ENCODE measurements at regions of chr11 and their contacts with region 1.

Region 1: GRCh38 chr11:134275534-134276395 is at the start of gene GLB1L3:
- DNase-seq: peak; percentile 89
- ATAC-seq: peak; percentile 80
- H3K4me3 Mint-ChIP-seq: peak within 1 kb of the TSS; percentile 96
- H3K27ac Mint-ChIP-seq: peak within 1 kb of the TSS; percentile 96
- H3K4me1 Mint-ChIP-seq: peaks cover 40% of the 10 kb centered on the region
- H3K27me3 Mint-ChIP-seq: peaks cover 3% of the 10 kb centered on the region
- total RNA-seq, gene GLB1L3: 11.7 to 12.2 TPM

Region 2: GRCh38 chr11:133947321-133947756 is 328.4 kb before region 1 on chr11:
- CTCF ChIA-PET with region 1: interaction called, 3 read pairs
- POLR2A ChIA-PET with region 1: interaction called, 7 read pairs
- intact Hi-C with region 1: loop called in 1 of 2 experiments (anchors 5 kb)
- DNase-seq: peak; percentile 87
- ATAC-seq: peak; percentile 27
- H3K4me3 Mint-ChIP-seq: peak overlapping the region; percentile 65
- H3K27ac Mint-ChIP-seq: peak overlapping the region; percentile 85
- H3K4me1 Mint-ChIP-seq: peaks cover 75% of the 10 kb centered on the region
- H3K27me3 Mint-ChIP-seq: no peaks in the 10 kb centered on the region

Region 3: GRCh38 chr11:134253188-134253993 is 22.4 kb before region 1 on chr11 and contains the starts of genes ACAD8 and THYN1:
- CTCF ChIA-PET with region 1: interaction called, 33 read pairs
- POLR2A ChIA-PET with region 1: interaction called, 7 read pairs
- intact Hi-C with region 1: loop called (anchors 1 kb)
- DNase-seq: peak; percentile 98
- ATAC-seq: peak; percentile 99
- H3K4me3 Mint-ChIP-seq: peak within 1 kb of the TSS; percentile 90
- H3K27ac Mint-ChIP-seq: peak within 1 kb of the TSS; percentile 80
- H3K4me1 Mint-ChIP-seq: peaks cover 36% of the 10 kb centered on the region
- H3K27me3 Mint-ChIP-seq: no peaks in the 10 kb centered on the region
- total RNA-seq, gene ACAD8: 12.4 to 16.6 TPM
- total RNA-seq, gene THYN1: 75.5 to 89.5 TPM

Region 4: GRCh38 chr11:134261626-134262488 is 13.9 kb before region 1 on chr11:
- CTCF ChIA-PET with region 1: interaction called, 13 read pairs
- POLR2A ChIA-PET with region 1: interaction called, 5 read pairs
- intact Hi-C with region 1: no loop called
- DNase-seq: peak; percentile 60
- ATAC-seq: peak; percentile 81
- H3K4me3 Mint-ChIP-seq: no peak overlapping the region
- H3K27ac Mint-ChIP-seq: no peak overlapping the region
- H3K4me1 Mint-ChIP-seq: no peaks in the 10 kb centered on the region
- H3K27me3 Mint-ChIP-seq: no peaks in the 10 kb centered on the region

Region 5: DNA sequence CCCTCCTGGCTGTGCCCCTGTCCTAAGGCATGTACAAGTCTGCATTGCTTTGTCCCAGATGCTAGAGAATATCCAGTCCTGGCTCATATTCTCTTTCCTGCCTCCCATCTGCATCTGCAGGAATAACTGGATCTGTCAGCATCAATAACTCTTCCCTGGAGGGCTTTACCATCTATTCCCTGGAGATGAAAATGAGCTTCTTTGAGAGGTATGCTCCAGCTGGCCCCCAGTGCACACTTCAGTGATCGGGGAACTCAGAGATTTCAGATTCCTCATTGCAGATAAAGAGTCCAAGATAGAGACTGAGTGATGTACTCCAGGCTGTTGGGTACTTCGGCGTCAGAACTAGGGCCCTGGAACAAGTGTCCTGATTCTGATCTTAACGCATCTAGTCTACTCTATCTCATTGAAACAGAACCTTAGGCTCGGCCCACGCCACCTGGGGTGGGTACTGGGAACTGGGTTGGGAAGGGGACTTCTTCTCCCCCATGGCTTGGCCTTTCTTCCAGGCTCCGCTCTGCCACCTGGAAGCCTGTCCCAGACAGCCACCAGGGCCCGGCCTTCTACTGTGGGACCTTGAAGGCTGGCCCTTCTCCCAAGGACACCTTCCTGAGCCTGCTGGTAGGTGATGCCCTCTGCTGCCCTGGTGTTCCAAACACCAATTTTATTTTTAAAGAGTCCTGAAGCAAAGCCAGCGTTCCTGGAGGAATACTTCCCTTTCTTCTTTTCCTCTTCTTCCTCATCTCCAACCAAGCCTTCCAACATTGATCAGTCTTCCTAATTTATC is 38.2 kb after region 1 on chr11:
- CTCF ChIA-PET with region 1: no interaction called
- POLR2A ChIA-PET with region 1: no interaction called
- intact Hi-C with region 1: no loop called
- DNase-seq: no peak
- ATAC-seq: no peak
- H3K4me3 Mint-ChIP-seq: no peak overlapping the region
- H3K27ac Mint-ChIP-seq: no peak overlapping the region
- H3K4me1 Mint-ChIP-seq: no peaks in the 10 kb centered on the region
- H3K27me3 Mint-ChIP-seq: peaks cover 2% of the 10 kb centered on the region

Region 6: DNA sequence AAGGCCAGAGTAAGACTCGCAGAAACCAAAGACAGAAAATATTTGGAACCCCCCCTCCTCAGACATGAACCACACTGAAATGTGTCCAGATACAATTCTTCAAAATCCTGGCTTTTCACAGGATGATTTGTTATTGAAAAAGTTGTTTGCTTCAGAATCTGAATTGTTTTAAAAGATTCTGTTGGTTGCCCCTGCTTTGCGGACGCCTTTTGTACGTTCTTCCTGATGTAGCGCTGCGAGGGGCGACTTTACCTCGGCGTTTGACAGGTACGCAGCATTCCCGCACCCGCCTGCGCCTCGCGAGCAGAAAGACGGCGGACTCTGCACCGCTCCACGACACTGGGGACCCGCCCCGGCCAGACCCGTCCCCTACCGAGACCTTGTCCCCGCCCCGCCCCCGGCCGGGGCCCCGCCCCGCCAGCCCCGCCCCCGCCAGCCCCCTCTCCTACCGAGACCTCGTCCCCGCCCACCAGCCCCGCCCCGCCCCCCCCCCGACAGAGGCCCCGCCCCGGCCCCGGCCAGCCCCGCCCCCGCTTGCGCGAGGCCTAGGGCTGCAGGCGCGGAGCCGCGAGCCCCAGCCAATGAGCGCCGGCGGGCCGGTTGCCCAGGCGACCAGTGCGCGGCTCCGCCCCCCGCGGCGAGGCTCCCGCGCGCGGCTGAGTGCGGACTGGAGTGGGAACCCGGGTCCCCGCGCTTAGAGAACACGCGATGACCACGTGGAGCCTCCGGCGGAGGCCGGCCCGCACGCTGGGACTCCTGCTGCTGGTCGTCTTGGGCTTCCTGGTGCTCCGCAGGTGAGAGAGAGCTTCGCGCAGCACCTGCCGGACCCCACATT is 55.8 kb after region 1 on chr11 and contains the start of gene GLB1L2:
- CTCF ChIA-PET with region 1: interaction called, 4 read pairs
- POLR2A ChIA-PET with region 1: no interaction called
- intact Hi-C with region 1: loop called (anchors 1 to 5 kb)
- DNase-seq: peak; percentile 86
- ATAC-seq: peak; percentile 99
- H3K4me3 Mint-ChIP-seq: peak within 1 kb of the TSS; percentile 75
- H3K27ac Mint-ChIP-seq: peak within 1 kb of the TSS; percentile 64
- H3K4me1 Mint-ChIP-seq: peaks cover 12% of the 10 kb centered on the region
- H3K27me3 Mint-ChIP-seq: peaks cover 23% of the 10 kb centered on the region
- total RNA-seq, gene GLB1L2: 3.9 to 4.2 TPM